ENCODE measurements at regions of chr1 and their contacts with region 1.

Region 1: DNA sequence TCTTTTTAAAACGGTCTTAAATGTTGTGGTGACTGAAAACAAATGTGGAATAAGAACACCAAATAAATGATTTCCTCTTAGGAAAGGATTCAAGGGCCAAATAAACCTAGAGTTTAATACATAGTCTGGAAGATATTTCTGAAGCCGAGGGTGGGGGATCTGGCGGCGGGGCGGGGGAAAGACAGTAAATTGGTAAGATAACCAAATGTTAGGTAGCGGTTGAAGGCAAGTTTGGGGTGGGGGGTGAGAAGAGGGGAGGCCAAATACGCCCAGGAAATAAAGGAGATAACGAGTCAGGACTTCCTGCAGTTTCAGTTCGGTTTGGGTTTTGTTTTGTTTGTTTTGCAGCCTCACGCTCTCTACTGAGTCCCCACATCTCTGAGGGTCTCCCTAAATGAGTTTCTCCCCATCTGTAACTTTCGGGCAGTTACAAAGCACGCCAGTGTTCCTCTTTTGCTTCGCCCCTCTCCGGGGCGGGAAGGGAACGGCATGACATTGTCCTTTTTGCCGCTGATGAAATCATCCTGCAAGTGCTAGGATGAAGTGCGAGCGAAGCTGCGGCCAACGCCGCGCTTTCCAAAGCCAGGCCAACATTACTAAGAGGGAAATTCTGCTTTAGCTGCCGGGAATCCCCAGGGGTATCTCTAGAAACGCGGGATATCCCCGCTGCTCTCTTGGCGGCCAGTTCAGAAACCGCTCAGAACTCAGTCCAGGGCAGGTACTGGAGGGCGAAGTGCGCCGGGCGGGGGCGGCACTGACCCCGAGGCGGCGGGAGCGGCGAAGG is 844 bp downstream of the NIBAN1 start:
- DNase-seq: peak; percentile 84
- ATAC-seq: peak; percentile 63
- H3K4me3 Mint-ChIP-seq: peak overlapping the region; percentile 86
- H3K27ac Mint-ChIP-seq: peak overlapping the region; percentile 97
- H3K4me1 Mint-ChIP-seq: peaks cover 45% of the 10 kb centered on the region
- H3K27me3 Mint-ChIP-seq: peaks cover 16% of the 10 kb centered on the region

Region 2: GRCh38 chr1:184051485-184052193 is 921.8 kb before region 1 on chr1 and contains the start of gene TSEN15:
- CTCF ChIA-PET with region 1: no interaction called
- POLR2A ChIA-PET with region 1: no interaction called
- intact Hi-C with region 1: loop called (anchors 10 kb)
- DNase-seq: peak; percentile 89
- ATAC-seq: peak; percentile 97
- H3K4me3 Mint-ChIP-seq: peak within 1 kb of the TSS; percentile 93
- H3K27ac Mint-ChIP-seq: peak within 1 kb of the TSS; percentile 99
- H3K4me1 Mint-ChIP-seq: peaks cover 33% of the 10 kb centered on the region
- H3K27me3 Mint-ChIP-seq: peaks cover 9% of the 10 kb centered on the region
- total RNA-seq, gene TSEN15: 44.1 to 47.3 TPM

Region 3: DNA sequence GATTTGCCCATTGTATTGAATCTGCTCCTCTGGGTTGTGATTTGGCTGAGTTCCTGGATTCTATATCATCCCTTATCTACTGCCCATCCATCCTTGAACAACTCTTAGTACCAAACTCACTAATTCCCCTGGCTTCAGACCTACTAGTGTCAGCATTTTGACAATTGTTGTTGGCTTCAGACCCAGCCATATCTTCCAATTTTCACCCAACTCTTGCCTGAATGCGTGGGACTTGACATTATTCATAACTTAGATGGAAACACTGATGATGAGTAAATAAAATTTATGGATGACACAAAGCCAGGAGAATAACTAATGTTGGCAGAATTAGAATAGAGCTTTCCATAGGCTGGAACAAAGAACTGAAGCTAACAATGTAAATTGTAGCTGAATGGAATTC is 191.5 kb before region 1 on chr1:
- CTCF ChIA-PET with region 1: no interaction called
- POLR2A ChIA-PET with region 1: no interaction called
- intact Hi-C with region 1: no loop called
- DNase-seq: no peak
- ATAC-seq: no peak
- H3K4me3 Mint-ChIP-seq: no peak overlapping the region
- H3K27ac Mint-ChIP-seq: no peak overlapping the region
- H3K4me1 Mint-ChIP-seq: no peaks in the 10 kb centered on the region
- H3K27me3 Mint-ChIP-seq: no peaks in the 10 kb centered on the region

Region 4: GRCh38 chr1:184866991-184867788 is 106.3 kb before region 1 on chr1:
- CTCF ChIA-PET with region 1: interaction called, 4 read pairs
- POLR2A ChIA-PET with region 1: interaction called, 6 read pairs
- intact Hi-C with region 1: loop called (anchors 1 kb)
- DNase-seq: peak; percentile 75
- ATAC-seq: peak; percentile 85
- H3K4me3 Mint-ChIP-seq: peak overlapping the region; percentile 32
- H3K27ac Mint-ChIP-seq: peak overlapping the region; percentile 90
- H3K4me1 Mint-ChIP-seq: peaks cover 46% of the 10 kb centered on the region
- H3K27me3 Mint-ChIP-seq: no peaks in the 10 kb centered on the region

Region 5: DNA sequence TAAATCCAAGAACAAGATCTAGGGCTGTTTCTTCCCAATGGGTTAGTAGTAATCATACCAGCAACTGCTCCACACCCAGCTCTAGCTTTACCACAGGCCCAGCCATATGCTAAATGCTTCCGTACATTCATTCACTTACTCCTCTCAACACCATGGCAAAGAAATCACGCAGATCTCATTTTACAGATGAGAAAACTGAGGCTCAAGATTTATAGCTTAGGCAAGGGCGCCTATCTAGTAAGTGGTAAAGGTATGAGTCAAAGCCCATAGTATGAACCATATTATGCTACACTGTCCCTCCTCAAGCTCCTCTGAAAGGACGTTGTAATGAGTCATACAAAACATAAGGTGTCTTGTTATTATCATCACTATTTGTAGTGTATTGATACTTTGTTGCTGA is 81.3 kb before region 1 on chr1:
- CTCF ChIA-PET with region 1: interaction called, 4 read pairs
- POLR2A ChIA-PET with region 1: interaction called, 10 read pairs
- intact Hi-C with region 1: loop called (anchors 1 kb)
- DNase-seq: peak; percentile 48
- ATAC-seq: peak; percentile 74
- H3K4me3 Mint-ChIP-seq: no peak overlapping the region
- H3K27ac Mint-ChIP-seq: peak overlapping the region; percentile 67
- H3K4me1 Mint-ChIP-seq: peaks cover 52% of the 10 kb centered on the region
- H3K27me3 Mint-ChIP-seq: no peaks in the 10 kb centered on the region

Region 6: GRCh38 chr1:185044981-185045813 is 71.7 kb after region 1 on chr1 and contains the start of gene RNF2:
- CTCF ChIA-PET with region 1: no interaction called
- POLR2A ChIA-PET with region 1: no interaction called
- intact Hi-C with region 1: loop called in 1 of 2 experiments (anchors 2 kb)
- DNase-seq: peak; percentile 87
- ATAC-seq: peak; percentile 87
- H3K4me3 Mint-ChIP-seq: peak within 1 kb of the TSS; percentile 94
- H3K27ac Mint-ChIP-seq: peak within 1 kb of the TSS; percentile 86
- H3K4me1 Mint-ChIP-seq: peaks cover 34% of the 10 kb centered on the region
- H3K27me3 Mint-ChIP-seq: no peaks in the 10 kb centered on the region
- total RNA-seq, gene RNF2: 19.6 to 23.6 TPM

Region 7: DNA sequence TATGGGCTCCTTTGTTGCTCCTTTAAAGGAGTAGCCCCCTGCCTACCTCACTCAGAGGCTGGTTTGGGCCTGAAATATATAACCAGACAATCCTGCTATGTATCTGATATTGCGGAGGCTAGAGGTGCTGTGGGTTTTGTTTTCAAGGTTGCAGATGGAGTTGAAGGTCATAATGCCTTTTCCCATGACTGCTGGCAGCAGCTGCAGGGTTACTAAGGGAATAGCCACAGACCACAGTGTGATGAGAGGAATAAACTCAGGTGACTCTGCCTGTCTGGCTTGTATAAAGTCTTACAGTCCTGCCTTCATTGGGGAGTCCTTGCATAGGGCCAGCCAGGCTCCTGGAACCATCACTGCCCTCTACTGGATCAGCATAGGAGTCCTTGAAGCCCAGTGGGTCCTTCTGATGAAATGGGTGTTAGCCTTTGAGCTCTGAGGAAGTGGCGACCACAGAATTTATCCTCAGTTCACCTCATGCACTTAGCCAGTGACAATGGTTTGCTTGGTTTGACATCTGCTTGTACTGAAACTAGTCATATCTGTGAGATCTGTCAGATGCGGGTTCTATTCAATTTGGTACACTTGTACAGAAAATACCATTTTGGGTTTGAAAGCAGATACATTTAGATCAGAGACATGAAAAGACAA is 586.3 kb after region 1 on chr1:
- CTCF ChIA-PET with region 1: no interaction called
- POLR2A ChIA-PET with region 1: no interaction called
- intact Hi-C with region 1: loop called in 1 of 2 experiments (anchors 10 kb)
- DNase-seq: peak; percentile 68
- ATAC-seq: peak; percentile 90
- H3K4me3 Mint-ChIP-seq: no peak overlapping the region
- H3K27ac Mint-ChIP-seq: peak overlapping the region; percentile 59
- H3K4me1 Mint-ChIP-seq: peaks cover 42% of the 10 kb centered on the region
- H3K27me3 Mint-ChIP-seq: no peaks in the 10 kb centered on the region

Measured in activated CD4-positive, alpha-beta T cell treated with anti-CD3 and anti-CD28 coated beads for 36 hours (primary cell).